ENCODE measurements at regions of chr14 and their contacts with region 1.

Region 1: GRCh38 chr14:56117765-56118610 is at the start of gene PELI2:
- DNase-seq: peak; percentile 32 to 62
- ATAC-seq: peak; percentile 76 to 83
- H3K4me3 ChIP-seq: peak within 1 kb of the TSS; percentile 71 to 86 (median 78)
- H3K27ac ChIP-seq: peak within 1 kb of the TSS; percentile 75 to 87 (median 82)
- H3K4me1 ChIP-seq: peaks cover 8 to 11% of the 10 kb centered on the region in 2 donors
- H3K27me3 ChIP-seq: no peaks in the 10 kb centered on the region
- CTCF ChIP-seq: peak in 1 of 5 experiments; percentile 20
- POLR2A ChIP-seq: peak; percentile 54 to 76
- total RNA-seq, gene PELI2: 2.5 to 5.8 (median 4.2) TPM

Region 2: GRCh38 chr14:55707365-55707804 is 410.6 kb before region 1 on chr14:
- in situ Hi-C with region 1: no loop called
- intact Hi-C with region 1: loop called (anchors 5 kb)
- DNase-seq: no peak
- ATAC-seq: peak; percentile 28 to 34
- H3K4me3 ChIP-seq: no peak overlapping the region
- H3K27ac ChIP-seq: no peak overlapping the region
- H3K4me1 ChIP-seq: peaks cover under 1 to 3% of the 10 kb centered on the region in 2 donors
- H3K27me3 ChIP-seq: no peaks in the 10 kb centered on the region
- CTCF ChIP-seq: peak; percentile 40 to 55 (median 53)
- POLR2A ChIP-seq: no peak

Region 3: GRCh38 chr14:56195704-56196103 is 77.7 kb after region 1 on chr14:
- in situ Hi-C with region 1: no loop called
- intact Hi-C with region 1: loop called (anchors 5 kb)
- DNase-seq: peak in 1 of 2 donors; percentile 30
- ATAC-seq: peak; percentile 43 to 58
- H3K4me3 ChIP-seq: no peak overlapping the region
- H3K27ac ChIP-seq: peak overlapping the region in 3 of 4 donors; percentile 19 to 41 (median 39)
- H3K4me1 ChIP-seq: peaks cover 9 to 24% of the 10 kb centered on the region in 2 donors
- H3K27me3 ChIP-seq: no peaks in the 10 kb centered on the region
- CTCF ChIP-seq: no peak
- POLR2A ChIP-seq: no peak

Region 4: DNA sequence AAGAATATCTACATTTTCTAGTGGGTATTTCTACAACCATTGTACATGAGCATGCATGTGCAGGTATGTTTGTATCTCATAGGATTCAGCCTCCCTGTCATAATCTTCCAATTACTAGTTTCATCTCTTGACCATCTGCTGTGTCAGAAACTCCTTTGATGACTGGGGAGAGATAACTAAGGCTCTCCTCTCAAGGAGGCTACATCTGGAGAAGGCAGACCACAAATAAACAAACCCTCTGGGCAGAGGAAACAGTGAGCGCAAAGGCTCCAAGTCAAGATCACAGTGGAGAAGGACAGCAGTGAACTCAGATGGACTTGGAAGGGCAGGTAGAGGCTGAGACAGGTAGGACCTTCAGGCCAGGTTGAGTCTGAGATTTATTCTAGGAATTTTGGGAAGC is 166.7 kb after region 1 on chr14:
- in situ Hi-C with region 1: no loop called
- intact Hi-C with region 1: no loop called
- DNase-seq: no peak
- ATAC-seq: no peak
- H3K4me3 ChIP-seq: no peak overlapping the region
- H3K27ac ChIP-seq: no peak overlapping the region
- H3K4me1 ChIP-seq: no peaks in the 10 kb centered on the region
- H3K27me3 ChIP-seq: no peaks in the 10 kb centered on the region
- CTCF ChIP-seq: no peak
- POLR2A ChIP-seq: no peak

Region 5: DNA sequence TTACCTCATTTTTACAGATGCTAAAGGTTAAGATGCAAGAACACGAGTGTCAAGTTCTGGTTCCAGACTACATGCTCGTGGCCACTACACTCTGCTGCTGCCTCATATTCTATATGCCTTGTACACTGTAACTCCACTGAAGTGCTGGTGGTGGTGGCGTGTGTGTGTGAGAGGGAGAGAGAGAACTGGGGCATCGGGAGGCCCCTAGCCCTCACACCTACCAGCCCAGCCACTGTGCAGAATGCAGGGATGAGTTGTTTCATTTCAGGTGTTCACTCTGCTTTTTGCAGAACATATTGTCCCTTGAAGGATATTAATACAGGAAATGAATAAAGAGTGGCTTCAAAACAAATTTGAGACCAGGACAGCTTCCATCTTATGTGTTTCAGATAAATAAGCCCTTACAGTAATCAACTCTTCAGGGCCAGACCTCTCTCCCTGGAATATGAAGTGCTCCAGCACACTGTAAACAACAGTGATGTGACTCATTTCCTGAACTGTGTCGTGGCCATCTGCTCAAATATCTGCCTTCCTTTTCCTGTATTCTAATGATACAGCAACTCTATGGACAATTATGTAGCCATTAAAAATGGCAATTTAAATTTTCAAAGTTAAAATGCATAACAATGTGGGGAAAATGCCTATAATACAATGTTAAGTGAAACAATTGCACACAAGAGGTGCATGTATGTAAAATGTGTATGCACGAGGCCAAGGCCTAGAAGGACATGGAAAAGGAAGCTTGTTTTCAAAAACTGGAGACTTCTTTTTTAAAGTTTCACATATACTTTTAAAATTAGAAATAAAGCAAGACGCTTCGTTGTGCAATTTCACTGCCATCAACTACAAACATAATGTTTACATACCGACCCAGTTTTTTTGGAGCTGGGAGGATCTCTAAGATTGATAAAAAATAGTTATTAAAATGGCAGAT is 215.6 kb after region 1 on chr14:
- in situ Hi-C with region 1: no loop called
- intact Hi-C with region 1: no loop called
- DNase-seq: no peak
- ATAC-seq: no peak
- H3K4me3 ChIP-seq: no peak overlapping the region
- H3K27ac ChIP-seq: peak overlapping the region in 1 of 4 donors; percentile 11
- H3K4me1 ChIP-seq: peaks cover 5 to 14% of the 10 kb centered on the region in 2 donors
- H3K27me3 ChIP-seq: no peaks in the 10 kb centered on the region
- CTCF ChIP-seq: no peak
- POLR2A ChIP-seq: peak in 1 of 2 donors; percentile 9